AG04449 (cell line): ENCODE measurements at regions of chr17 and their contacts with region 1.

Region 1: GRCh38 chr17:58577642-58578091 is 63.2 kb upstream of the MTMR4 start:
- DNase-seq: no peak
- H3K4me3 ChIP-seq: no peak overlapping the region
- CTCF ChIP-seq: peak; percentile 55

Region 2: DNA sequence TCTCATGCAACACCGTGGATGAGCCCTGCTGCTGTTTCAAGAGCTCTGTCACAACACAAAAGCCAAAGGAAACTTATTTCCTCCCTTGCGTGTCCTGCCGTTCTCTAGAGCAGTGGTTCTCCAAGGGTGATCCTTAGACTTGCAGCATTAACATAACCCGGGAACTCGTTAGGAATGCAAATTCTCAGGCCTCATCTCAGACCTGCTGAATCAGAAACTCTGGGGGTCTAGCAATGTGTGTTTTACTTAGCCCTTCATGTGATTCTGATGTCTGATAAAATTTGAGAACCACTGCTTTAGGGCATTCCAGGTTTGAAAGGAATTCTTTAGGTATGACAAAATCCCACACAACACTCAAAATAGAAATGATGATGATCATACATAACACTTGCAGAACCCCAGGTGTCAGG is 11.9 kb before region 1 on chr17:
- CTCF ChIA-PET with region 1: interaction called, 11 read pairs
- POLR2A ChIA-PET with region 1: no interaction called
- DNase-seq: no peak
- H3K4me3 ChIP-seq: no peak overlapping the region
- CTCF ChIP-seq: no peak

Region 3: DNA sequence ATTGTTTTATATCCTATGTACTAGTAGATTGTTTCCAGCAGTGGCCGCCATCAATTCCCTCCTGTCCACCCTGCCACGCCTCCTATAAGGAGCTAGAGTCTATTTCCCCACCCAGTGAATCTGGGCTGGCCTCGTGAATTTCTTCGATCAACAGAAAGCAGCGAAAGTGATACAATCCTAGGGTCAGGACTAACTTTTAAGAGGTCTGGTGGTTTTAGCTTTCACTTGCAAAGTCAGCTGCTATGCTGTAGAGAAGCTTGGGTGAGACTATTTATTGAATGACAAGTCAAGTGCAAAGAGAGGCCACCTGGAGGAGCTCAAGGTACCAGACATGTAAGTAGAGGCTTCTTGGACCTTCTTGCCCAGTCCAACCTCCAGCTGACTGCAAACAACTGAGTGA is 17.7 kb after region 1 on chr17:
- CTCF ChIA-PET with region 1: interaction called, 17 read pairs
- POLR2A ChIA-PET with region 1: no interaction called
- DNase-seq: no peak
- H3K4me3 ChIP-seq: no peak overlapping the region
- CTCF ChIP-seq: no peak